SK-N-SH (cell line): ENCODE measurements at regions of chr17 and their contacts with region 1.

Region 1: DNA sequence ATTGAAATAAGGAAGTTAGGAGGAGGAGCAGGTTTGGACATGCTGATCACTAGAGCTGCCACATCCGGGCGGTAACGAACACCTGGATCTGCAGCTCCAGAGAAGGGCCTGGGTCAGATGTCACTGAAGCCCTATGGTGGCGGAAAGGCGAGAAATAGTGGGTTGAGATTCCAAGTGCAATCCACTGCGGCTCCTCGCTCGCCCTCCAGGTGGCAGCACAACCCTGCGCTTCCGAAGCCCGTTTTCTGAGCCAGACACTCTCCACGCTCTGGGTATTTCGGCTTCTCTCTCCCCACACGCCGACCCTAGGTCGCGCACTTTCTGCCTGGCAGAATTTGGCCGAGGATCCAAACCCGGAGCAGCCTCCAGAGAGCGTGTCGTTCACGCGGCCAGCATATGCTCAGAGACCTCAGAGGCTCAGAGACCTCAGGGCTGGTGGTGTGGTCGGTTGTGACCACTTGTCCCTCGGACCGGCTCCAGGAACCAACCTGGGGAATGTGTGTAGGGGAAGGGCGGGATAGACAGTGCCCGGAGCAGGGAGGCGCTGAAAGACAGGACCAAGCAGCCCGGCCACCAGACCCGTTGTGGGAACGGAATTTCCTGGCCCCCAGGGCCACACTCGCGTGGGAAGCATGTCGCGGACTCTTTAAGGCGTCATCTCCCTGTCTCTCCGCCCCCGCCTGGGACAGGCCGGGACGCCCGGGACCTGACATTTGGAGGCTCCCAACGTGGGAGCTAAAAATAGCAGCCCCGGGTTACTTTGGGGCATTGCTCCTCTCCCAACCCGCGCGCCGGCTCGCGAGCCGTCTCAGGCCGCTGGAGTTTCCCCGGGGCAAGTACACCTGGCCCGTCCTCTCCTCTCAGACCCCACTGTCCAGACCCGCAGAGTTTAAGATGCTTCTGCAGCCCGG is 744 bp upstream of the SLC2A4 start:
- DNase-seq: peak; percentile 84
- H3K4me3 ChIP-seq: peak overlapping the region; percentile 50 to 64
- H3K27ac ChIP-seq: peak overlapping the region in 1 of 2 experiments; percentile 52; a peak in 1 of 4 replicates
- H3K4me1 ChIP-seq: peaks cover 6 to 18% of the 10 kb centered on the region in 2 experiments; a peak in 2 of 4 replicates
- H3K27me3 ChIP-seq: no peaks in the 10 kb centered on the region
- CTCF ChIP-seq: peak; percentile 72
- EP300 ChIP-seq: no peak
- RAD21 ChIP-seq: peak; percentile 93

Region 2: DNA sequence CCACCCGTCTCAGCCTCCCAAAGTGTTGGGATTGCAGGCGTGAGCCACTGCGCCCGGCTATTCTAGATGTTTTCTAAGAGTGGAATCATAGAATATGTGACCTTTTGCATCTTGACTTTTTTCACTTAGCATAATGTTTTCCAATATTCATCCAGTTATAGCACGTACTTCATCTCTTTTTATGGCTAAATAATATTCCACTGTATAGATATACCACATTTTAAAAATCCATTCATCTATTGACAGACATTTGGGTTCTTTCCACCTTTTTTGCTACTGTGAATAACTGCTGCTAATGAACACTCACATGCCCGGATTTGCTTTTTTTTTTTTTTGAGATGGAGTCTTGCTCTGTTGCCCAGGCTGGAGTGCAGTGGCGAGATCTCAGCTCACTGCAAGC is 23.4 kb after region 1 on chr17:
- CTCF ChIA-PET with region 1: interaction called, 169 read pairs
- POLR2A ChIA-PET with region 1: no interaction called
- DNase-seq: no peak
- H3K4me3 ChIP-seq: no peak overlapping the region
- H3K27ac ChIP-seq: no peak overlapping the region
- H3K4me1 ChIP-seq: peaks cover 1 to 2% of the 10 kb centered on the region in 2 experiments; a peak in 3 of 4 replicates
- H3K27me3 ChIP-seq: no peaks in the 10 kb centered on the region
- CTCF ChIP-seq: no peak
- EP300 ChIP-seq: no peak
- RAD21 ChIP-seq: no peak